Natural killer cell (primary cell): ENCODE measurements at regions of chr3 and their contacts with region 1.

Region 1: GRCh38 chr3:152322756-152323155 is 54.0 kb downstream of the MBNL1 start:
- DNase-seq: peak in 1 of 2 donors; percentile 64
- ATAC-seq: peak; percentile 58 to 85 (median 79)
- H3K4me3 ChIP-seq: no peak overlapping the region
- H3K4me3 Mint-ChIP-seq: peak overlapping the region; percentile 47
- H3K27ac ChIP-seq: peak overlapping the region; percentile 24
- H3K27ac Mint-ChIP-seq: peak overlapping the region; percentile 77 to 90
- H3K4me1 ChIP-seq: peaks cover 9% of the 10 kb centered on the region
- H3K4me1 Mint-ChIP-seq: peaks cover 80 to 83% of the 10 kb centered on the region in 2 donors
- H3K27me3 ChIP-seq: no peaks in the 10 kb centered on the region
- H3K27me3 Mint-ChIP-seq: no peaks in the 10 kb centered on the region
- CTCF ChIP-seq: no peak

Region 2: DNA sequence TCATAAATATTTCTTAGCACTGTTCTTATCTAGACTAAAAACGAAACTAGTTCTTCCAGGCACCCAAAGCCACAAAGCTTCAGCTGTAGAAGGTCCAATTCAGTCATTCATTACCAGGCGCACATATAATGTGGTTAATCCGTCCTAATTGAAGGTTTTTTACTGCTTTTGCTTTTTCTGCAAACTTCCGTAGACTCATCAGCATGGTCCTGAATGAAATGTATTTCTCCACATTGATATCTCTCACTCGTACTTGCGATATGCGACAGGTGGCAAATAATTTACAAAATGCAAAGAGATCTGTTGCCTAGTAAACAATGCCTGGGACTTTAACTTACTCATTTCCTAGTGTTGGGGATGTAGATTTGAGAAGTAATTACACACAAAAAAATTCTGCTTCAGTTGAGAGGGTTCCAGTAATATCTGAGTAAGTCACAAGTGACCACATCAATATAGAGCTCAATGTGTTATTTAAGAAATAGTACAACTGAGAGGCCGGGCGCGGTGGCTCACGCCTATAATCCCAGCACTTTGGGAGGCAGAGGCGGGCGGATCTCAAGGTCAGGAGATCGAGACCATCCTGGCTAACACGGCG is 129.0 kb before region 1 on chr3:
- intact Hi-C with region 1: loop called (anchors 5 kb)
- DNase-seq: peak in 1 of 2 donors; percentile 78
- ATAC-seq: peak; percentile 74 to 80 (median 79)
- H3K4me3 ChIP-seq: peak overlapping the region; percentile 50
- H3K4me3 Mint-ChIP-seq: peak overlapping the region; percentile 84
- H3K27ac ChIP-seq: peak overlapping the region; percentile 84
- H3K27ac Mint-ChIP-seq: peak overlapping the region; percentile 85
- H3K4me1 ChIP-seq: peaks cover 20% of the 10 kb centered on the region
- H3K4me1 Mint-ChIP-seq: peaks cover 66% of the 10 kb centered on the region in 2 donors
- H3K27me3 ChIP-seq: no peaks in the 10 kb centered on the region
- H3K27me3 Mint-ChIP-seq: no peaks in the 10 kb centered on the region
- CTCF ChIP-seq: no peak

Region 3: DNA sequence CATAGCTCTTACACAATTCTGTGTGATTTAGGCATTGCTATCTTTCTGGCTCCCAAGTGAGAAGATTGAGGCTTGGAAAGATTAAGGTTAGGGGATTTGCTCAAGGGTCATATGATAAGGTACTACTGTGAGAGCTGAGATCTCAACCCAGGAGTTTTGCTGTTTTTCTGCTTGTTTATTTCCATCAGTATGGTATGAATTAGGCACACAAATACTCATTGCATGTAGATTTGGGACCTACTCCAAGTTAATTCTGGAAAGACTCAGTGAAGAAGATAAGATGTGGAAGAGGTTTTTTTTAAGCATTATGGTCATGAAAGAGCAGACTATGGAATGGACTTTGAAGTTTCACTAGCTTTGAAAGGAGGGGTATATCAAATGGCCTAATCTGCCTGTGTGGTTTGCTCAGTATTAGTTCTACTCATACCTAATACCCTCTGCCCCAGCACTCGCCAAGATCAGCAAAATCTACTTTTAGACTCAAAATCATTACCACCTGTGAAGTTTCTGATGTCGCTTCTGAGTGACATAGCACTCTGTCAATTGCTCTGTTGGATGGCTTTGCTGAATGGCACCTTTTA is 41.5 kb before region 1 on chr3:
- intact Hi-C with region 1: loop called (anchors 5 kb)
- DNase-seq: no peak
- ATAC-seq: peak; percentile 8 to 12 (median 9)
- H3K4me3 ChIP-seq: no peak overlapping the region
- H3K4me3 Mint-ChIP-seq: peak overlapping the region; percentile 43
- H3K27ac ChIP-seq: peak overlapping the region; percentile 58
- H3K27ac Mint-ChIP-seq: peak overlapping the region; percentile 81 to 84
- H3K4me1 ChIP-seq: peaks cover 18% of the 10 kb centered on the region
- H3K4me1 Mint-ChIP-seq: peaks cover 77 to 86% of the 10 kb centered on the region in 2 donors
- H3K27me3 ChIP-seq: no peaks in the 10 kb centered on the region
- H3K27me3 Mint-ChIP-seq: no peaks in the 10 kb centered on the region
- CTCF ChIP-seq: no peak

Region 4: DNA sequence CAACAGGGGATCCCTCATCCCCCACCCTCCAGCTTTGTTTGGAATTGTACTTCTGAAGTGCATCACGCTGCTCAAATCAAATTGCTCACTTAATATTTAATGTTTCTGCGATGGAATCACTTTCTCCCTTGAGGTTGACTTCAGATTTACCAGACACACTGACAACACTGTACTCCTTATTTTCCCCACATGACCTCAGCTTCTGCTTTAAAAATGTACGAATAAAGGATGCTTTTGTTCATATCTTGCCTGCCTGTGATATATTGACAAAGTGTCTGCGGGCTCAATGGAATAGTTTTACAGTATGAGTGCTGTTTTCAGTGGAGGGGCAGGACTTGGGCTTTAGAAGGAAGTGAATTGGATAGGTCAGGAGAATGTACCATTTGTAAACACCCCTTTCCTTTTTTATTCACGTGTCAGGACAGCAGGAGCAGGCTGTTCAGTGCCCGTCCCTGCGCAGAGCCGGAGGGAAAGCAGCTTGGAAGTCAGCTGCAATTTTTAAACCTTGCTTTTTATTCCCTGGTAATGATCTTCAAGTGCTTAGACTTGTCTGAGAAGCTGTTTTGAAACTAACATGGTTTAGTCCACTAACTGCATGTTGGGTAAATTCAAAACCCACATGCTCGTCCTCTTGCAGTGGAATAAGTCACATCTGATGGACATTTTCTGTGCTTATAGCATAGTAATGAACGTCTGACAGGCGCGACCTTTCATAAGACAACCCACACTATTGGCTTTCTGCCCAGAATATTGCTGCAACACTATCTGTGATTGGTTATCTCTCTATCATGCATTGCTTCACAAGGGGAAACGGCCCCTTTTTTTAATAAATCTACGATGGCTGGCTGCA is 24.1 kb before region 1 on chr3:
- intact Hi-C with region 1: loop called (anchors 2 kb)
- DNase-seq: peak; percentile 35 to 90
- ATAC-seq: peak; percentile 71 to 86 (median 78)
- H3K4me3 ChIP-seq: no peak overlapping the region
- H3K4me3 Mint-ChIP-seq: peak overlapping the region; percentile 71
- H3K27ac ChIP-seq: peak overlapping the region; percentile 60
- H3K27ac Mint-ChIP-seq: peak overlapping the region; percentile 76 to 89
- H3K4me1 ChIP-seq: peaks cover 42% of the 10 kb centered on the region
- H3K4me1 Mint-ChIP-seq: peaks cover 57 to 76% of the 10 kb centered on the region in 2 donors
- H3K27me3 ChIP-seq: no peaks in the 10 kb centered on the region
- H3K27me3 Mint-ChIP-seq: no peaks in the 10 kb centered on the region
- CTCF ChIP-seq: no peak

Region 5: GRCh38 chr3:152309535-152310307 is 13.0 kb before region 1 on chr3:
- intact Hi-C with region 1: loop called (anchors 2 kb)
- DNase-seq: peak in 1 of 2 donors; percentile 54
- ATAC-seq: peak; percentile 73 to 79 (median 75)
- H3K4me3 ChIP-seq: no peak overlapping the region
- H3K4me3 Mint-ChIP-seq: peak overlapping the region; percentile 15
- H3K27ac ChIP-seq: peak overlapping the region; percentile 18
- H3K27ac Mint-ChIP-seq: peak overlapping the region; percentile 81 to 91
- H3K4me1 ChIP-seq: peaks cover 16% of the 10 kb centered on the region
- H3K4me1 Mint-ChIP-seq: peaks cover 63 to 75% of the 10 kb centered on the region in 2 donors
- H3K27me3 ChIP-seq: no peaks in the 10 kb centered on the region
- H3K27me3 Mint-ChIP-seq: no peaks in the 10 kb centered on the region
- CTCF ChIP-seq: no peak

Region 6: DNA sequence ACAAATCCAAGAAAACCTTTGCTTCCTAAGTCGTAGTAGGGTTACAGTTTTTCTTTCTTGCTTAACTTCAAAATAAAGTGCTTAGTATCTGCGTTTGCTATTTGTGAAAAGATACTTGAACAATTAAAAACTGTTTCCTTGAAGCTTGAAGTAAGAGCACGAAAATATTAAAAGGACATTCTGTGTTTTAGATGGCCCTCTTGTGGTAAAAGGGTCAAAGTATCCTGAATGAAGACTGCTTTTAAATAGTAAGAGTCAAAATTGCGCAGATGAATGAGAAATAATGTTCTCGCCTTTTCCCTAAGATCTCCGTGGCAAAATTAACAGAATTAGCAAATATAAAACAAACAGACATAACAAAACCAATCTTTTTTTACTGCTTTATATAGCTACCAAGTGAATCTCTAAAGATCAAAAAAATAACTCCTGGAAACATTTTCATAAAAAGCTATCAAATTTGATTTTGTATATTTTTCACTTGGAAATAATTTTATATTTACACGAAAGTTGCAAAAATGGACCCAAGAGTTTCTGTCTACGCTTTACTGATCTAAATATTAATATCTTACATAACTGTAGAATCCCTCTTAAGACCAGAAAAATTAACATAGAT is 121.4 kb after region 1 on chr3:
- intact Hi-C with region 1: loop called (anchors 10 kb)
- DNase-seq: peak in 1 of 2 donors; percentile 68
- ATAC-seq: peak; percentile 58 to 72 (median 70)
- H3K4me3 ChIP-seq: no peak overlapping the region
- H3K4me3 Mint-ChIP-seq: no peak overlapping the region
- H3K27ac ChIP-seq: peak overlapping the region; percentile 14
- H3K27ac Mint-ChIP-seq: peak overlapping the region; percentile 84 to 85
- H3K4me1 ChIP-seq: peaks cover 10% of the 10 kb centered on the region
- H3K4me1 Mint-ChIP-seq: peaks cover 61% of the 10 kb centered on the region in 2 donors
- H3K27me3 ChIP-seq: no peaks in the 10 kb centered on the region
- H3K27me3 Mint-ChIP-seq: no peaks in the 10 kb centered on the region
- CTCF ChIP-seq: peak; percentile 70